ENCODE measurements at regions of chr1 and their contacts with region 1.

Region 1: GRCh38 chr1:145978854-145979759 is 14.6 kb downstream of the POLR3GL start:
- DNase-seq: peak; percentile 68 to 93
- ATAC-seq: peak; percentile 81 to 93 (median 87)
- H3K4me3 ChIP-seq: peak overlapping the region; percentile 6
- H3K4me3 Mint-ChIP-seq: no peak overlapping the region
- H3K27ac ChIP-seq: peak overlapping the region; percentile 97
- H3K27ac Mint-ChIP-seq: no peak overlapping the region
- H3K4me1 ChIP-seq: peaks cover 58% of the 10 kb centered on the region
- H3K4me1 Mint-ChIP-seq: peaks cover 10 to 29% of the 10 kb centered on the region in 2 donors
- H3K27me3 ChIP-seq: no peaks in the 10 kb centered on the region
- H3K27me3 Mint-ChIP-seq: no peaks in the 10 kb centered on the region
- CTCF ChIP-seq: no peak

Region 2: DNA sequence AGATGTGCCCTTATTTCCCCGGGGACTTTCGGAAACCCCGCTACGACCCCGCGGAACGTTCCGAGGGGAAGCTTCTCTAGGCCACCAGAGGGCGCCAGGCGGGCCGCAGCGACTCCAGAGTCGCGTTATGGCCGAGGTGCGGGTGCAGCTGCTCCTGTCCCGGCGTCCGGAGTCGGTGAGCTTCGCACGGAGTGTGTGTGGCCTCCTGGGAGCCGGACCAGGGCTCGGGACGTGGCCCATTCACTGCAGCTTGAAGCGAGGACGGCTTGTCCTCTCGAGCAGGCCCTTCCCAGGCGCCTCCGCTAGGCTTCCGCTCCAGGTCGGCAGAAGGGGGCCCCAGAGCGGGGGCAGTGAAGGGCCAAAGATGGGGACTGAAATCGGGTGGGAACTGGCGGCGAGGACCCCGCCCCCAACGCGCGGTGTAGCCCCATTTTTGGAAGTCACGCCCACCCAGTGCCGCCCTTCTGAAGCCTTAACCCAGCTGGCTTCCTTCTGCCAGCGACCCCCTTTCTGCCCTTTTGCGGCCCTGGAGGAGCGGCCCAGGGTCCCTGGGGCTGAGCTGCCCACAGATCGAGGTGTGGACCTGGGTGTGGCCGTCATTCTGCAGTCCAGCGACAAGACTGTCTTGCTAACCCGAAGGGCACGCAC is 133.5 kb before region 1 on chr1 and contains the start of gene NUDT17:
- intact Hi-C with region 1: loop called (anchors 5 kb)
- DNase-seq: peak; percentile 74 to 88
- ATAC-seq: peak; percentile 86 to 89 (median 87)
- H3K4me3 ChIP-seq: peak within 1 kb of the TSS; percentile 68
- H3K4me3 Mint-ChIP-seq: no peak within 1 kb of the TSS
- H3K27ac ChIP-seq: peak within 1 kb of the TSS; percentile 44
- H3K27ac Mint-ChIP-seq: no peak within 1 kb of the TSS
- H3K4me1 ChIP-seq: peaks cover 20% of the 10 kb centered on the region
- H3K4me1 Mint-ChIP-seq: no peaks in the 10 kb centered on the region
- H3K27me3 ChIP-seq: no peaks in the 10 kb centered on the region
- H3K27me3 Mint-ChIP-seq: no peaks in the 10 kb centered on the region
- CTCF ChIP-seq: peak; percentile 88
- total RNA-seq, gene NUDT17: 3.3 to 4.9 (median 3.4) TPM

Region 3: DNA sequence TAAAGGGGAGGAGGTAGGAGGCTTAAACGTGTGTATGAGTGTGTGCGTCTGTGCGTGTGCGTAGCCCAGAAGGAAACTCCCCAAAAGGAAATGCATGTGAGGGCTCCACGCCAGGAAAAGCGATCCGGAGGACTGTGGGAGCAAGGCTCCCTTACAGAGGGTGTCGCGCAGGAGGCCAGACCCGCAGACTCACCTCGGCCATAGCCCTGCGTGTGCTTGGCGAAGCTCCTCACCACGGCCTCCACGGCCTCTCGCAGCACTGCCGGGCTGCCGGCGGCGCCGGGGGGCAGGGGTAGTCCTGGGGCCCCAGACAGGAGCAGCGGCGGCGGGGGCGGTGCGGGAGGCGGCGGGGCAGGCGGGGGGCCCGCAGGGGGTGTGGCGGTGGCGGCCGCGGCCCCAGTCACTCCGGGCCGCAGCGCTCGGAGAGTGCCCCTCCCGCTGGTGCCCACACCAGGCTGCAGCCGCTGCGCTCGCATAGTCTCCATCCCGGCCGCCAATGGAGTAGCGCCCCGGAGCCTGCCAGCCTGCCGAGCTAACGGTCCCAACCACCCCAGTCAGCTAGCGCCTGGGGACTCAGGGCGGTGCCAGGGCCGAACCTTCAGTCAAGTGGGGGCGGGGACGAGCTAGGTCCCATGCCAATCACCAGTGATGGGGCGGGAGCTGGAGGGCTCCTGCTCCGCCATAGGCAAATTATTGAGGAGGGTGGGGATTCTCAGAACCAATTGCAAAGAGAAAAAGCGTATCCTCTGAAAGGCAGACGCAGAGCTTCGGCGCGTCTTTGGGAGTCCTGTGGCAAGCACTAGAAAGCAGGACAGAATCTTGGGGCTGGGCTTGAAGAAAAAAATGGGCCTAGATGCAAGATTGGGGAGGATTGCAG is 21.4 kb before region 1 on chr1 and contains the start of gene LIX1L:
- intact Hi-C with region 1: loop called (anchors 2 kb)
- DNase-seq: peak; percentile 88 to 98
- ATAC-seq: peak; percentile 87 to 98 (median 91)
- H3K4me3 ChIP-seq: peak within 1 kb of the TSS; percentile 88
- H3K4me3 Mint-ChIP-seq: peak within 1 kb of the TSS; percentile 96
- H3K27ac ChIP-seq: peak within 1 kb of the TSS; percentile 85
- H3K27ac Mint-ChIP-seq: peak within 1 kb of the TSS; percentile 86 to 87
- H3K4me1 ChIP-seq: peaks cover 44% of the 10 kb centered on the region
- H3K4me1 Mint-ChIP-seq: peaks cover 77 to 83% of the 10 kb centered on the region in 2 donors
- H3K27me3 ChIP-seq: no peaks in the 10 kb centered on the region
- H3K27me3 Mint-ChIP-seq: no peaks in the 10 kb centered on the region
- CTCF ChIP-seq: no peak
- total RNA-seq, gene LIX1L: 33.4 to 41.3 (median 38.2) TPM

Region 4: DNA sequence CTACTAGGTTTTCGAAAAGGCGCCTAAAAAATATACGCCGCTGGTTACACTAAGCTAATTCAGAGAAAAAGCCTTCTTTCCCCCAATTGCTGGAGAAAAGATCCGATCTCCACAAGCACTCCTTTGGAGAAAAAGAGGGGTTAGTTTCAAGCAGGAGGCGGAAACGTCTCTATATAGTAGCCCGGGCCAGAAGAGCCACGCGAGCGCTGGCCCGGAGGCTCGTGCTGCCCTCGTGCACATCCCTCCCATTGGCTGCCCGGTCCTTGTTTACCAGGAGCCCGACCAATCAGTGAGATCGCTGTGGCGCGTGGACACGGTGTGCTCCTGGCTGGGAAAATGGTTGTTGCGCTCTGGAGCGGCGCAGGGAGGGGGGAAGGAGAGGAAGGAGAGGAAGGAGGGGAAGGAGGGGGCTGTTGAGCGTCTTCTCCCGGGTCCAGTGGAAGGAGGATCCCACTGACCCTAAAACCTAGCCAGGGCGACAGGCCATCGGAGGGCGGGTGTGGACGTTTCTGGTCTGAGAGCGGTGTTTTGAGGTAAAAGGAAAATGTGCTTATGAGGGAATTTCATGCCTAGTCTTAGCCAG is 17.4 kb after region 1 on chr1 and contains the start of gene TXNIP:
- intact Hi-C with region 1: loop called (anchors 1 kb)
- DNase-seq: peak; percentile 91 to 95
- ATAC-seq: peak; percentile 85 to 97 (median 95)
- H3K4me3 ChIP-seq: peak within 1 kb of the TSS; percentile 64
- H3K4me3 Mint-ChIP-seq: peak within 1 kb of the TSS; percentile 97
- H3K27ac ChIP-seq: peak within 1 kb of the TSS; percentile 88
- H3K27ac Mint-ChIP-seq: peak within 1 kb of the TSS; percentile 97 to 99
- H3K4me1 ChIP-seq: peaks cover 48% of the 10 kb centered on the region
- H3K4me1 Mint-ChIP-seq: peaks cover 71 to 76% of the 10 kb centered on the region in 2 donors
- H3K27me3 ChIP-seq: no peaks in the 10 kb centered on the region
- H3K27me3 Mint-ChIP-seq: no peaks in the 10 kb centered on the region
- CTCF ChIP-seq: no peak
- total RNA-seq, gene TXNIP: 984 to 1,724 (median 1,422) TPM

Region 5: DNA sequence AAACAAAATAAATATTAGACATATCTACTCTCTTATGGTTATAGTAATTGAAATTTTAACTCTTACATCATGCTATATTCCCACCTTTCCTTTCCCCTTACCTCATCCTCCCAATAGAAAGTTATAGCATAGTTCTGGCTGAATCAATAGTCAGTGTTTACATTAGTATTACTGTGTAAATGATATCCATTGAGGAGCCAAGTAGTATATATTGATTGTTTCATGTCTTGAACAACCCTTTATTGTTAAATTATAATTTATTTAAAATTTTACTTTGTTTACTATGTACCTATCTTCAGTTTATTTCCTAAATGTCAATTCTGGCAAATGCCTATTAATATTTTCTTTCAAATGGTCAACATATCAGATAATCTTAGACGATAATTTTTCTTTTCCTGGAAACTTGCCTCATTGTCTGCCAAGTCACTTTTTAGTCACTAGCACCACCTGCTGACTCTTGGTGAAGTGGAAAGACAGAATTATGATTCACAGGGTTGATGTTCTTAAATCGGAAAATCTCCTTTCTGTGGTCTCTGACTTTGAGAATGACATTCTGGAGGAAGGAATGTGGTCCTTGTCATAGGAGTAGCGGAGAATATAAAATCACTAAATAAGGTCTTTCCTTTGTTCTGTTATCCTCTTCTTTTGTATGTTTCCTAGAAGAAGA is 33.8 kb after region 1 on chr1:
- intact Hi-C with region 1: loop called (anchors 1 kb)
- DNase-seq: peak; percentile 31 to 87
- ATAC-seq: peak; percentile 74 to 86 (median 82)
- H3K4me3 ChIP-seq: no peak overlapping the region
- H3K4me3 Mint-ChIP-seq: no peak overlapping the region
- H3K27ac ChIP-seq: no peak overlapping the region
- H3K27ac Mint-ChIP-seq: no peak overlapping the region
- H3K4me1 ChIP-seq: peaks cover under 1% of the 10 kb centered on the region
- H3K4me1 Mint-ChIP-seq: peaks cover 0 to 6% of the 10 kb centered on the region in 2 donors
- H3K27me3 ChIP-seq: no peaks in the 10 kb centered on the region
- H3K27me3 Mint-ChIP-seq: peaks cover 5 to 13% of the 10 kb centered on the region in 2 donors
- CTCF ChIP-seq: peak; percentile 89

Measured in natural killer cell (primary cell).